Activated CD8-positive, alpha-beta T cell treated with anti-CD3 and anti-CD28 coated beads, Interleukin-2, amount 10 ng/mL, durations not matched to agents 7 days and 5 days (primary cell): ENCODE measurements at regions of chr9 and their contacts with region 1.

Region 1: DNA sequence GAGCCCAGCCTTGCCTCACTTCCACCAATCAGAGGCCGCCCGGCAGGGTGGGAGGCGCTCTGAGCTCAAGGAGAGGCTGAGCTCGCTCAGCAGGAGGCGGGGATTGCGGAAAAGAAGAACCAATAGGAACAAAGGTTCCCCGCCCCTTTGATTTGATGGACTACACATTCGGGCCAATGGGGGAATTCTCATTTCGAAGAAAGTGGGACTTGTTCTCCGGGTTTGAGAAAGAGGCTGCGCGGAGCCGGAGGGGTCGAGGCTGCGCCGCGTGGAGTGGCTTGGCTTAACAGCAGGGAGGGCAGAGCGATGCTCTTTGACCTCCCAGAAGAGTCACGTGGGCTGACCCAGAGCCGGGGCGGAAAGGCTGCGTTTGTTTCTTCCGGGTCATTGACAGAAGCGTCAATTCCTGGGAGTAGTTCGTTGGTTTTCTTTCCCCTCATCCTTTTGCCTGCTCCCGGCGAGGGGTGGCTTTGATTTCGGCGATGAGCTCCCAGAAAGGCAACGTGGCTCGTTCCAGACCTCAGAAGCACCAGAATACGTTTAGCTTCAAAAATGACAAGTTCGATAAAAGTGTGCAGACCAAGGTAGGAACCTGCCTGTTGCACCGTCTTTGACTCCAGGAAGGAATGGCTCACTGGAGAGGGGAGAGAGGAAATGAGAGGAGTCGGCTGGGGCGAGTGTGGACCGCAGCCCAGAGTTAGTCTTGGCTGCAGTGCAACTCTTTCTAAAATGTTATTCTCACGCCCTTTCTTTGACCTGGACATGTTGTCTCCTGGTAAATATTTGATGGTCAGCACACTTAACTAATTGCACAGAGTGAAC is at the start of gene C9orf85:
- DNase-seq: peak; percentile 99
- ATAC-seq: peak; percentile 94
- H3K4me3 Mint-ChIP-seq: peak within 1 kb of the TSS; percentile 100
- H3K27ac Mint-ChIP-seq: peak within 1 kb of the TSS; percentile 100
- H3K4me1 Mint-ChIP-seq: peaks cover 55% of the 10 kb centered on the region
- H3K27me3 Mint-ChIP-seq: no peaks in the 10 kb centered on the region
- total RNA-seq, gene C9orf85: 11.1 to 12.0 TPM

Region 2: DNA sequence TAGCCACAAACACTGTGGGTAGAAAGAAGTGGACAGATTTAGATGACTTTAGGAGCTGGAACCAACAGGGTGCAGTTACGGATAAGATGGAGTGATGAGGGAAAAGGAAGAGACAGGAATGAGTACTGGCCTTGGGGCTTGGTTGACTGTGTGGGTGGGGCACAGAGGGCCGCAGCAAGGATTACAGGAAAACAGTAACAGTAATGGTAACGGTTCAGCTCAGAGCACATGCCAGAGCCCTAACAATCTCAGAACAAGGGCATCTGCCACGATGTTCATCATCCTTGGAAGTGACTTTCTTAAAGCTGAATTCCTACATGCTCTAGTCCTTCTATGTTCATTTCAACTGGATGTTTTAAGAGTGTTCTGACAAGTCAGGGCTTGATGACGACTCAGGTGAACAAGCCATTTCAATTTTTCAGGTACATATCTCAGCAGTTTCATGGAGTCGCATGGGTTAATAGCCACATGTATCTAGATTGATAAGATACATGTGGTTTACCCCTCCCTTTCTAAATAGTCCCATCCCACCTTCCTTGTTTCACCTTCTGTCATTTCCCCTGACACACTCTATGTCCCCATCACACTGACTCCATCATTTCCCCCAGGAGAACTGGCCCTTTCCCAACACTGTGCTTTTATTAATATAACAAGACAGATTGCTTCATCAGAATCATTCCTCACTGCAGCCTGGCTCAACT is 208.1 kb before region 1 on chr9:
- CTCF ChIA-PET with region 1: no interaction called
- POLR2A ChIA-PET with region 1: no interaction called
- DNase-seq: no peak
- ATAC-seq: no peak
- H3K4me3 Mint-ChIP-seq: no peak overlapping the region
- H3K27ac Mint-ChIP-seq: peak overlapping the region; percentile 37
- H3K4me1 Mint-ChIP-seq: peaks cover 9% of the 10 kb centered on the region
- H3K27me3 Mint-ChIP-seq: no peaks in the 10 kb centered on the region

Region 3: DNA sequence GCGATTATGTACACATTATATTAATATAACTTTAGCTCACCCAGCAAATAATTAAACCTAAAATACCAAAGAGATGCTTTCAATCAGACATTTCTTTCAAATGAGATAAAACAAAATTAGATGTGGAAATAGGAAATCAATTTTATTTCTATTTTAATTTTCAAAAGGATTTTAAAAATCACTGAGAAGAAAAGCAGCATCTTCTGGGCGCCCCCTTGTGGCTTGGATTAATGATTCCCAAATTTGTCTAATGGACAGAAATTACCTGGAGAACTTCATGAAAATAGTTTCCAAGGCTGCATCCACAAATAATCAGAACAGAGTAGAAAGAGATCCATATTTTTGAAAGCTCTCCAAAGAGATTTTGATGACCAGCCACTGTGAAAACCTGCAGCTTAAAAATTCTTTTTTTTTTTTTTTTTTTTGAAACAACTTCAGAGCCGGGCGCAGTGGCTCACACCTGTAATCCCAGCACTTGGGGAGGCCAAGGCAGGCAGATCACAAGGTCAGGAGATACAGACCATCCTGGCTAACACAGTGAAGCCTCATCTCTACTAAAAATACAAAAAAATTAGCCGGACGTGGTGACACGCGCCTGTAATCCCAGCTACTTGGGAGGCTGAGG is 92.2 kb before region 1 on chr9:
- CTCF ChIA-PET with region 1: interaction called, 10 read pairs
- POLR2A ChIA-PET with region 1: interaction called, 3 read pairs
- DNase-seq: peak; percentile 54
- ATAC-seq: no peak
- H3K4me3 Mint-ChIP-seq: no peak overlapping the region
- H3K27ac Mint-ChIP-seq: no peak overlapping the region
- H3K4me1 Mint-ChIP-seq: peaks cover 18% of the 10 kb centered on the region
- H3K27me3 Mint-ChIP-seq: no peaks in the 10 kb centered on the region

Region 4: GRCh38 chr9:71876106-71876505 is 35.4 kb before region 1 on chr9:
- CTCF ChIA-PET with region 1: interaction called, 4 read pairs
- POLR2A ChIA-PET with region 1: interaction called, 10 read pairs
- DNase-seq: no peak
- ATAC-seq: no peak
- H3K4me3 Mint-ChIP-seq: no peak overlapping the region
- H3K27ac Mint-ChIP-seq: no peak overlapping the region
- H3K4me1 Mint-ChIP-seq: peaks cover 7% of the 10 kb centered on the region
- H3K27me3 Mint-ChIP-seq: no peaks in the 10 kb centered on the region

Region 5: GRCh38 chr9:71885467-71885866 is 26.0 kb before region 1 on chr9:
- CTCF ChIA-PET with region 1: interaction called, 7 read pairs
- POLR2A ChIA-PET with region 1: interaction called, 17 read pairs
- DNase-seq: no peak
- ATAC-seq: no peak
- H3K4me3 Mint-ChIP-seq: no peak overlapping the region
- H3K27ac Mint-ChIP-seq: no peak overlapping the region
- H3K4me1 Mint-ChIP-seq: peaks cover 32% of the 10 kb centered on the region
- H3K27me3 Mint-ChIP-seq: no peaks in the 10 kb centered on the region

Region 6: GRCh38 chr9:71897577-71897976 is 13.9 kb before region 1 on chr9:
- CTCF ChIA-PET with region 1: interaction called, 14 read pairs
- POLR2A ChIA-PET with region 1: interaction called, 67 read pairs
- DNase-seq: peak; percentile 65
- ATAC-seq: peak; percentile 82
- H3K4me3 Mint-ChIP-seq: peak overlapping the region; percentile 58
- H3K27ac Mint-ChIP-seq: peak overlapping the region; percentile 95
- H3K4me1 Mint-ChIP-seq: peaks cover 86% of the 10 kb centered on the region
- H3K27me3 Mint-ChIP-seq: no peaks in the 10 kb centered on the region

Region 7: DNA sequence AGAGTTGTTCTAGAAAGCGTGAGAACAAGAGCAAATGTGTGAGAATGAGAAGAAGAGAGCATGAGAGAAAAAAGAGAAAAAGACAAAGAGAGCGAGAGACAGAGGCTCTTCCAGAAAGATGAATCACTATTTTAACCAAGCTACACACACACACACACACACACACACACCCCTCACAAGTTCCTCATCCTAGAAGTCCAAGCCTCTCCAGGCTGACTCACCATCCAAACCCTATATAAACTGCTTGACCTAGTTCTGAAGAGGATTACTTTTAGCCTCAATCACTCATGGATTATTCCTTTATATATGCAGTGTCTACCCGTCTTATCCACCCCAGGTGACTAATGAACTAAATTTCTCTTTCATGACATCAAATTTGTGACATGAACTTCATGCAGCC is 111.4 kb after region 1 on chr9:
- CTCF ChIA-PET with region 1: interaction called, 10 read pairs
- POLR2A ChIA-PET with region 1: interaction called, 6 read pairs
- DNase-seq: no peak
- ATAC-seq: no peak
- H3K4me3 Mint-ChIP-seq: no peak overlapping the region
- H3K27ac Mint-ChIP-seq: no peak overlapping the region
- H3K4me1 Mint-ChIP-seq: peaks cover 7% of the 10 kb centered on the region
- H3K27me3 Mint-ChIP-seq: no peaks in the 10 kb centered on the region